H1 (cell line): ENCODE measurements at regions of chr6 and their contacts with region 1.

Region 1: GRCh38 chr6:42819803-42820511 is 38.1 kb downstream of the BICRAL start:
- DNase-seq: no peak
- H3K4me3 ChIP-seq: no peak overlapping the region
- H3K27ac ChIP-seq: no peak overlapping the region
- H3K4me1 ChIP-seq: peaks cover 4 to 22% (median 14%) of the 10 kb centered on the region in 4 experiments; a peak in 5 of 7 replicates
- H3K27me3 ChIP-seq: no peaks in the 10 kb centered on the region
- CTCF ChIP-seq: peak; percentile 2 to 34 (median 16); a peak in 2 of 4 replicates
- EP300 ChIP-seq: no peak
- POLR2A ChIP-seq: no peak
- RAD21 ChIP-seq: peak; percentile 0 to 32; a peak in 1 of 4 replicates

Region 2: GRCh38 chr6:42808492-42809483 is 11.2 kb before region 1 on chr6:
- CTCF ChIA-PET with region 1: interaction called, 22 read pairs
- POLR2A ChIA-PET with region 1: interaction called, 3 read pairs
- DNase-seq: no peak
- H3K4me3 ChIP-seq: no peak overlapping the region
- H3K27ac ChIP-seq: no peak overlapping the region
- H3K4me1 ChIP-seq: no peaks in the 10 kb centered on the region
- H3K27me3 ChIP-seq: no peaks in the 10 kb centered on the region
- CTCF ChIP-seq: no peak
- EP300 ChIP-seq: no peak
- POLR2A ChIP-seq: no peak
- RAD21 ChIP-seq: no peak